ENCODE measurements at regions of chr11 and their contacts with region 1.

Region 1: GRCh38 chr11:34366522-34366921 is 8.7 kb upstream of the ABTB2 start:
- DNase-seq: no peak
- ATAC-seq: no peak
- H3K4me3 ChIP-seq: no peak overlapping the region
- H3K4me3 Mint-ChIP-seq: no peak overlapping the region
- H3K27ac ChIP-seq: no peak overlapping the region
- H3K27ac Mint-ChIP-seq: no peak overlapping the region
- H3K4me1 ChIP-seq: no peaks in the 10 kb centered on the region
- H3K4me1 Mint-ChIP-seq: no peaks in the 10 kb centered on the region
- H3K27me3 ChIP-seq: peaks cover 0 to 6% (median 4%) of the 10 kb centered on the region in 4 experiments
- H3K27me3 Mint-ChIP-seq: peaks cover 38% of the 10 kb centered on the region
- CTCF ChIP-seq: no peak

Region 2: DNA sequence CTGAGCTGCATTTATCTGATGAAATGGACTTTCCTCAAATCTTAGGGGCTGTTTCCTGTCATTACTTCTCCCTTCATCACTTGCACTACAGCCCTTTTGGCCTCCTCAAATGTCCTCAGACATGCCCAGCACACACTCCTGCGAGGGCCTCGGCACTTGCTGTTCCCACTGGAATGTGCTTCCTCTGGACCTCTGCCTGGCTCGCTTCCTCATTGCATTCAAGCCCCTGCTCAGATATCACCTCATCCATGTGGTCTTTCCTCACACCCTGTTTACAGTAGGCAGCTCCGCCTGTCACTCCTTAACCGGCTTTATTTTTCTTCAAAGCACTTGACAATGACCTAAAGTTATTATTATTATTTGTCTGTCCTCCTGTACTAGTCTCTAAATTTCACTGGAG is 252.1 kb before region 1 on chr11:
- CTCF ChIA-PET with region 1: no interaction called
- POLR2A ChIA-PET with region 1: no interaction called
- intact Hi-C with region 1: no loop called
- DNase-seq: no peak
- ATAC-seq: no peak
- H3K4me3 ChIP-seq: no peak overlapping the region
- H3K4me3 Mint-ChIP-seq: no peak overlapping the region
- H3K27ac ChIP-seq: no peak overlapping the region
- H3K27ac Mint-ChIP-seq: no peak overlapping the region
- H3K4me1 ChIP-seq: no peaks in the 10 kb centered on the region
- H3K4me1 Mint-ChIP-seq: peaks cover 3% of the 10 kb centered on the region
- H3K27me3 ChIP-seq: no peaks in the 10 kb centered on the region
- H3K27me3 Mint-ChIP-seq: no peaks in the 10 kb centered on the region
- CTCF ChIP-seq: no peak

Region 3: DNA sequence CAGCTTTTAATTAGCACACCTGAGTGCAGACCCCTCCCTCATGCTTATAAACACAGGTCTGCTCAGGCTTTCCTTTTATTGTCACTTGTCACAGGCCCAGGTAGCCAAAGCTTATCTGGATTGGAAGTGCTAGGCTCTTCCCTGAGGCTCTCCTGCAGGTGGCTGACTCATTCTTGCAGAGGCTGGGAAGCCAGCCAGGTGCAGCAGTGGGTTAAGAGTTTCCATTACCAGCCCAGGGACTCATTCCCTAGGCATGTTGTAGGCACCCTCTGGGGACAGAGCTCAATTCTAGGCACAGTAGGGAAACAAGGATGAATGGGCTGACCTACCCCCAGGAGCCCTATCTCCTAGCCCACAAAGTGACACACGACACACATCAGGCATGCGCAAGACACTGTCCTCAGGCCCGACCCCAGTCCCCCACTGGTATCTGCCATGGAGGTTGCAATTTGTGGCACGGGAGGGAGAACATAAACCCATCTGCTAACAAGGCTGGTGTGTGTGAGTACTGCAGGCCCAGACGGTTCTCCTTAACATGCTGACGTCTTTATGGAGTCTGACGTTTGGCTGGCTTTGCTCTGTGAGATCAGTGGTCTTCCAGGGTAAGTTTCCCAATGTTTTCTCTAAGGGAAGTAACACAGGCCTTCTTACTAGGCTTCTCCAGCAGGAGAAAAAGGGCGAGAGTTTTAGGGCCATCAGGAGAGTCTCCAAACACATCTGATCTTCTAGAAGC is 102.9 kb before region 1 on chr11:
- CTCF ChIA-PET with region 1: no interaction called
- POLR2A ChIA-PET with region 1: no interaction called
- intact Hi-C with region 1: no loop called
- DNase-seq: no peak
- ATAC-seq: no peak
- H3K4me3 ChIP-seq: no peak overlapping the region
- H3K4me3 Mint-ChIP-seq: no peak overlapping the region
- H3K27ac ChIP-seq: no peak overlapping the region
- H3K27ac Mint-ChIP-seq: no peak overlapping the region
- H3K4me1 ChIP-seq: no peaks in the 10 kb centered on the region
- H3K4me1 Mint-ChIP-seq: peaks cover 2% of the 10 kb centered on the region
- H3K27me3 ChIP-seq: no peaks in the 10 kb centered on the region
- H3K27me3 Mint-ChIP-seq: no peaks in the 10 kb centered on the region
- CTCF ChIP-seq: no peak

Region 4: DNA sequence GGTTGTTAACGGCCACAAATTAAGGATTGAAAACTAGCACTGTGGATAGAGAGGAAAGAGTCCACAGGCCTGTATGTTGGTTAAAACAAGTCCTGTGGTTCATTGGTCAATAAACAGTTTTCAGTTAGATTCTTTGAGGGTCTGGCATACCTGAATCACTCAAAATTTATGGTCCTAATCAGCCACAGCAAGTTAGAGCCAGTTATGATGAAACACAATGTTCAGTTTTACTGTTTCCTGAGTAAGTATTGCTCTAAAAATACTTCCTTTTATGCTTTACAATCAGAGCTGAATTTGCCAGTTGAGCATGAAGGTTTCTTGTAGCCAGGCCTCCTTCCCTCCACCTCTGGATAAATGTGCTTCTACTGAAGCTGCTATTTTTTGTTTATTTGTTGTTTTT is 59.3 kb after region 1 on chr11:
- CTCF ChIA-PET with region 1: no interaction called
- POLR2A ChIA-PET with region 1: no interaction called
- intact Hi-C with region 1: no loop called
- DNase-seq: no peak
- ATAC-seq: no peak
- H3K4me3 ChIP-seq: no peak overlapping the region
- H3K4me3 Mint-ChIP-seq: no peak overlapping the region
- H3K27ac ChIP-seq: no peak overlapping the region
- H3K27ac Mint-ChIP-seq: no peak overlapping the region
- H3K4me1 ChIP-seq: peaks cover 0 to 4% of the 10 kb centered on the region in 2 donors
- H3K4me1 Mint-ChIP-seq: peaks cover 2% of the 10 kb centered on the region
- H3K27me3 ChIP-seq: peaks cover 0 to 7% (median 0%) of the 10 kb centered on the region in 4 experiments
- H3K27me3 Mint-ChIP-seq: peaks cover 7% of the 10 kb centered on the region
- CTCF ChIP-seq: no peak

Region 5: GRCh38 chr11:34468209-34468841 is 101.8 kb after region 1 on chr11:
- CTCF ChIA-PET with region 1: interaction called, 14 read pairs
- POLR2A ChIA-PET with region 1: no interaction called
- intact Hi-C with region 1: no loop called
- DNase-seq: peak; percentile 37
- ATAC-seq: peak; percentile 65
- H3K4me3 ChIP-seq: no peak overlapping the region
- H3K4me3 Mint-ChIP-seq: no peak overlapping the region
- H3K27ac ChIP-seq: no peak overlapping the region
- H3K27ac Mint-ChIP-seq: no peak overlapping the region
- H3K4me1 ChIP-seq: no peaks in the 10 kb centered on the region
- H3K4me1 Mint-ChIP-seq: peaks cover 4% of the 10 kb centered on the region
- H3K27me3 ChIP-seq: no peaks in the 10 kb centered on the region
- H3K27me3 Mint-ChIP-seq: no peaks in the 10 kb centered on the region
- CTCF ChIP-seq: peak; percentile 67

Measured in B cell (primary cell).